CD4-positive, alpha-beta memory T cell (primary cell): ENCODE measurements at regions of chr16 and their contacts with region 1.

Region 1: DNA sequence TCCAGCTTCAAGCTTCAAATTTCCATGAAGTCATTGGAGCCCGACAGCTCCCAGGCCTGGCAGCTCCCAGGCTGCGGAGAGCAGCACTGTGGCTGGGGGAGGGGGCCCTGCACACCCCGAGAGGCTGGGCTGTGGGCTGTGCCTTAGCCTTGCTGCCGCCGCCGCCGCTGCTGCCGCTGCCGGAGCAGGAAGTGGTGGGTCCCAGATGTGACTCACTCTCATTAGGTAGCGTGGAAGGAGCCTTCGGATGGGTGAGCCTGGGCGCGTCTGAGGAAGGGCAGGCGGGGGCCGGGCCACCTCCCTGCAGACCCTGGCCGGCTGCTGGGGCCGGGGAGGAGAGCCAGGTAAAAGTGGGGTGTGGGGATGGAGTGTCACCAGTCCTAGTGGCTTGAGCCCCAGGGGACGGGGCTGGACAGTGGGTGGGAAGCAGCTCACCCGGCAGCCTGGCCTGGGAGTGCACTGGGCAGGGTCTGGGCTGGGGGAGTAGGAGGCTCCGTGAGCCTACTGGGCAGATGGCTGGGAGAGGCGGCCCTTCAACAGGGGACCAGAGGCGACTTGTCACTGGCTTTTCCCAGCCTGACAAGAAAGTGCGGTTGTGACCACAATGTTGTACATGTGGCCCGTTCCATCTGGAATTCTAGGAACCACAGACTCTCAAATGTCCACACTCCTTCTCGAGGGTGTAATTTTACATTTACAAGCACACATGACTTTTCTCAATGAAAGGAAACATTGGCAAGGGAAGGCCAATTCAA is at the start of gene ADCY7:
- DNase-seq: peak; percentile 77 to 92 (median 80)
- H3K4me3 ChIP-seq: peak within 1 kb of the TSS; percentile 75 to 76
- H3K4me3 Mint-ChIP-seq: peak within 1 kb of the TSS; percentile 93 to 99 (median 98)
- H3K27ac ChIP-seq: peak within 1 kb of the TSS; percentile 81
- H3K27ac Mint-ChIP-seq: peak within 1 kb of the TSS; percentile 95 to 99 (median 98)
- H3K4me1 ChIP-seq: peaks cover 60% of the 10 kb centered on the region
- H3K4me1 Mint-ChIP-seq: peaks cover 40 to 84% (median 56%) of the 10 kb centered on the region in 4 donors
- H3K27me3 ChIP-seq: no peaks in the 10 kb centered on the region
- H3K27me3 Mint-ChIP-seq: no peaks in the 10 kb centered on the region
- total RNA-seq, gene ADCY7: 230 to 235 TPM

Region 2: DNA sequence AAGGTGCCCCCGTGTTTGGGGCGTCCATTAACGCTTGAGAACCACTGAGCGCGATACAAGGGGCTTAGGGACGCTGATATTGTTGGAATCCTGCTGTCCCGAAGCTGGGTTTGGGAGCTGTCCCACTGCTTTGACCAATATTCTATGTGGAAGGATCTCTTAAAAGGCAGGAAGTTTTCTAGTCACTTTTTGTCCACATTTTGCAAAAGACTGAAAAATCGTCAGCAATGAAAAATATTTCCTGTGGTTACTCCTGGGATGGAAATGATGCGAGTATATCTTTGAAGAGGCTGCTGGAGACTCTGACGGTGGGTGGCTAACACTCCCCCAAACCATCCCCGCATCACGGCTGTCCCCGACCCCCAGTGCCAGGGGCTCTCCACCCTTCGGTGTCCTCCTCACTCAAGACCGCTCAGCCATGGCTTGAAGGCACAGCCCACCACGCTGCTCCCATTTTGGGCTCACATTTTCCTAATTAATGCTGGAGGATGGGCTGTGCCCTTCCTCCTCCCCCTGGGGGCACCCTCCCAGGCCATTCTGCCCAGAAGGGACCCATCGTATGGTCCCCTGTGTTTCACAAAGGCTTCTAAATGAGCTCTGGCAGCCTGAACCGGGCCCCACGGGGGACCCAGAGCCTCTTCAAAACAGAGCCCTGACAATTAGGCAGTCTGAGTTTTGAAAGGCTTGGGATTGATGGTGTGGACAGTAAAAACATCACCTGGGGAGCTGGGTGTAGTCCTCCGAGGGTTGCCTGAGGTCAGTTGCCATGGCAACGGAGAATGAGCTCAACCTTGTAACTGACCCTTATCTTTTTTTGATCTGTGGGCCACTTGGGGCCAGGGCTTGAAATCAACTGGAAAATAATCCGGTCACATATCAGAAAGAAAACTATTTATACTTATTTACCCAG is 734.3 kb before region 1 on chr16:
- CTCF ChIA-PET with region 1: no interaction called
- POLR2A ChIA-PET with region 1: no interaction called
- intact Hi-C with region 1: no loop called
- DNase-seq: peak in 1 of 5 donors; percentile 27
- H3K4me3 ChIP-seq: no peak overlapping the region
- H3K4me3 Mint-ChIP-seq: no peak overlapping the region
- H3K27ac ChIP-seq: no peak overlapping the region
- H3K27ac Mint-ChIP-seq: no peak overlapping the region
- H3K4me1 ChIP-seq: no peaks in the 10 kb centered on the region
- H3K4me1 Mint-ChIP-seq: peaks cover 0 to 13% (median 4%) of the 10 kb centered on the region in 4 donors
- H3K27me3 ChIP-seq: no peaks in the 10 kb centered on the region
- H3K27me3 Mint-ChIP-seq: peaks cover 0 to 2% of the 10 kb centered on the region in 2 donors

Region 3: DNA sequence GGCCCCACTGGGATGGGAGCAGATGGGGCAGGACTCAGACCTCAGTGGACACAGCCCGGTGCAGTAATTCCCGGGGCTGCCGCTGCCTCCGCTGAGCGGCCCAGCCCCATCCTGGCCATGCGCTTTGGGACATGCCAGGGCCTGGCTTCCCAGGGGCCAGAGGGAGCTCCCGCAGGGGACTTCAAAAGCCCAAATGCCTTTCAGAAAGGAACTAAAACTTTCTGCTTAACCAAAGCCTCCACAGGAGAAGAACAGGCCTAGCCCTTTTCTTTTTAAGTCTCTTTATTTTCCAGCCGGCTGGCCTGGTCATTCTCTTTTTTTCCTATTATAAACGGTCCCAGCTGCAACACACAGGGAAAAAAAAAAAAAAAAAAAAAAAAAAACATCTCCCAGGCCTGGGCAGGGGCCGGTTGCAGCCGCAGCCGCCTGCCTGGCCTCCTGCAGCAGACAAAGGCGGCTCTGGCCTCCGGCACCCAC is 399.9 kb before region 1 on chr16:
- CTCF ChIA-PET with region 1: no interaction called
- POLR2A ChIA-PET with region 1: no interaction called
- intact Hi-C with region 1: no loop called
- DNase-seq: no peak
- H3K4me3 ChIP-seq: no peak overlapping the region
- H3K4me3 Mint-ChIP-seq: no peak overlapping the region
- H3K27ac ChIP-seq: no peak overlapping the region
- H3K27ac Mint-ChIP-seq: no peak overlapping the region
- H3K4me1 ChIP-seq: no peaks in the 10 kb centered on the region
- H3K4me1 Mint-ChIP-seq: no peaks in the 10 kb centered on the region
- H3K27me3 ChIP-seq: no peaks in the 10 kb centered on the region
- H3K27me3 Mint-ChIP-seq: peaks cover 6 to 9% of the 10 kb centered on the region in 2 donors

Region 4: DNA sequence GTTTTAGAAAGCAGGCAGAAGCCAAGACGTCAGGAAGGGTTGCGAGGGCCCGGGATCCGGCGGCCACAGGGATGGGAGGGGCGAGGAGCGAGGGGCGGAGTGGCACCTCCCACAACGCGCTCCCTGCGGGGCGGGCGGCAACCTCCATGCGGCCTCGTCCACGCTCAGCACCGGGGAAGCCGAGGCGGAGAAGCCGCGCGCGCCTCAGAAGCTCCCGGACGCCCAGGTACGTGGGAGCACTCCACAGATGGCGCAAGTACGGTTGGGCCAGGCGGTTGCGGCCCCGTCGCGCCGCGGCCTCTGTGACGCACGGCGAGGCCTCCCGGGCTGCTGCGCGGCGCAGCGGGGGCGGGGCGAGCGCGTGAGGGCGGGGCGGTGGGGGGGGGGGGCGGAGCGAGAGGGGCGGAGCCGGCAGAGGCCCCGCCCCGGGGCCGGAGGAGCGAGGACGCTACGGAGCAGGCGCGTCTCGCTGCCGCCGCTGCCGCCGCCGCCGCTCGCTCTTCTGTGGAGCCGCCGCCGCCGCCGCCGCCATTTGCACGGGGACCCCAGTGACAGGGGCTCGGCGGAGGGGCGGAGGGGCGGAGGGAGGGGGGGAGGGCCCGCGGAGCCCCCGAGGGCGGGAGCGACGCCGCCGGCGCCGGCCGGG is 113.6 kb before region 1 on chr16 and contains the start of gene TENT4B:
- CTCF ChIA-PET with region 1: no interaction called
- POLR2A ChIA-PET with region 1: interaction called, 4 read pairs
- intact Hi-C with region 1: loop called (anchors 5 kb)
- DNase-seq: peak; percentile 92 to 95 (median 94)
- H3K4me3 ChIP-seq: peak within 1 kb of the TSS; percentile 84 to 93
- H3K4me3 Mint-ChIP-seq: peak within 1 kb of the TSS; percentile 91 to 97 (median 94)
- H3K27ac ChIP-seq: peak within 1 kb of the TSS; percentile 89
- H3K27ac Mint-ChIP-seq: peak within 1 kb of the TSS; percentile 93 to 99 (median 97)
- H3K4me1 ChIP-seq: peaks cover 47% of the 10 kb centered on the region
- H3K4me1 Mint-ChIP-seq: peaks cover 25 to 41% (median 34%) of the 10 kb centered on the region in 4 donors
- H3K27me3 ChIP-seq: no peaks in the 10 kb centered on the region
- H3K27me3 Mint-ChIP-seq: no peaks in the 10 kb centered on the region
- total RNA-seq, gene TENT4B: 22.4 to 23.5 TPM

Region 5: GRCh38 chr16:50245417-50246298 is 20.9 kb before region 1 on chr16:
- CTCF ChIA-PET with region 1: no interaction called
- POLR2A ChIA-PET with region 1: no interaction called
- intact Hi-C with region 1: no loop called
- DNase-seq: peak; percentile 25 to 46 (median 30)
- H3K4me3 ChIP-seq: peak overlapping the region in 1 of 2 donors; percentile 0
- H3K4me3 Mint-ChIP-seq: peak overlapping the region; percentile 67 to 84 (median 80)
- H3K27ac ChIP-seq: no peak overlapping the region
- H3K27ac Mint-ChIP-seq: peak overlapping the region in 3 of 7 donors; percentile 15 to 55 (median 38)
- H3K4me1 ChIP-seq: peaks cover 15% of the 10 kb centered on the region
- H3K4me1 Mint-ChIP-seq: peaks cover 0 to 8% (median 6%) of the 10 kb centered on the region in 4 donors
- H3K27me3 ChIP-seq: no peaks in the 10 kb centered on the region
- H3K27me3 Mint-ChIP-seq: no peaks in the 10 kb centered on the region

Region 6: DNA sequence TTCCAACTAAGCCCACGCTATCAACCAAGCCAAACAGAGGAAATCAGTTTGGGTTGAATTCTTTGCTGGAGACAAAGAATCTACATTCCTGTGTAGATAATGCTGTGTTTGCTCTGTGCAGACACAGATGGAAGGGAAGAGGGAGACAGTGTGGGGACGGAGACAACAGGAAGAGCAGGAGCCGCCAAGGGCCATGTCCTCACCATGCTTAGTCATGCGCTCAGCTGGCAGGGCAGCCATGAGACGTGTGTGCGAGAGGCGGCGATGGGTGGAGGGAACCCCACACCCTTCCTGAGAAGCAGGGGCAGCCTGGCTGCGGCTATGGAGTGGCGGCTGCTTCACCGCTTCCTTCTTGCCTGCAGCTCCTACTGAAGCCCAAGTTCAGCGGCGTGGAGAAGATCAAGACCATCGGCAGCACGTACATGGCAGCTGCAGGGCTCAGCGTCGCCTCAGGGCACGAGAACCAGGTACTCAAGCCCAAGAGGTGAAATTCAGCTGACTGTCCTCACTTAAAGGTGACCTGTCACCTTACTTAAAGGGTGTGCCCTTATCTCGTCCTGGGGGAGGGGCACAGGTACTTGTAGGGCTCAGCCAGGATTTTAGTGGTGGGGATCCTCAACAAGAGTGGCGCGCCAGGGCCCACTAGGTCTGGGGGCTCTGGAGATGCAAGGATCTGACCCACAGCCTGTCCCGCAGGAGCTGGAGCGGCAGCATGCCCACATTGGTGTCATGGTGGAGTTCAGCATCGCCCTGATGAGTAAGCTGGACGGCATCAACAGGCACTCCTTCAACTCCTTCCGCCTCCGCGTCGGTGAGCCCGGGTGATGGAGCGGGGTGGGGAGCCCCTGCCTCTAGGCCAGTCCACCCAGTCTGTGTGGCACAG is 47.3 kb after region 1 on chr16:
- CTCF ChIA-PET with region 1: interaction called, 5 read pairs
- POLR2A ChIA-PET with region 1: interaction called, 72 read pairs
- intact Hi-C with region 1: loop called (anchors 5 kb)
- DNase-seq: peak; percentile 26 to 67 (median 44)
- H3K4me3 ChIP-seq: no peak overlapping the region
- H3K4me3 Mint-ChIP-seq: peak overlapping the region in 5 of 8 donors; percentile 3 to 76 (median 17)
- H3K27ac ChIP-seq: no peak overlapping the region
- H3K27ac Mint-ChIP-seq: peak overlapping the region; percentile 62 to 90 (median 85)
- H3K4me1 ChIP-seq: peaks cover 25% of the 10 kb centered on the region
- H3K4me1 Mint-ChIP-seq: peaks cover 15 to 49% (median 29%) of the 10 kb centered on the region in 4 donors
- H3K27me3 ChIP-seq: no peaks in the 10 kb centered on the region
- H3K27me3 Mint-ChIP-seq: no peaks in the 10 kb centered on the region

Region 7: GRCh38 chr16:50354629-50355456 is 88.3 kb after region 1 on chr16:
- CTCF ChIA-PET with region 1: interaction called, 155 read pairs
- POLR2A ChIA-PET with region 1: interaction called, 6 read pairs
- intact Hi-C with region 1: loop called (anchors 1 kb)
- DNase-seq: peak in 4 of 5 donors; percentile 42 to 61 (median 54)
- H3K4me3 ChIP-seq: no peak overlapping the region
- H3K4me3 Mint-ChIP-seq: no peak overlapping the region
- H3K27ac ChIP-seq: no peak overlapping the region
- H3K27ac Mint-ChIP-seq: peak overlapping the region in 6 of 7 donors; percentile 0 to 89 (median 41)
- H3K4me1 ChIP-seq: peaks cover 3% of the 10 kb centered on the region
- H3K4me1 Mint-ChIP-seq: peaks cover 10 to 36% (median 23%) of the 10 kb centered on the region in 4 donors
- H3K27me3 ChIP-seq: no peaks in the 10 kb centered on the region
- H3K27me3 Mint-ChIP-seq: no peaks in the 10 kb centered on the region

Region 8: GRCh38 chr16:50478761-50479125 is 212.2 kb after region 1 on chr16:
- CTCF ChIA-PET with region 1: no interaction called
- POLR2A ChIA-PET with region 1: no interaction called
- intact Hi-C with region 1: no loop called
- DNase-seq: no peak
- H3K4me3 ChIP-seq: no peak overlapping the region
- H3K4me3 Mint-ChIP-seq: no peak overlapping the region
- H3K27ac ChIP-seq: no peak overlapping the region
- H3K27ac Mint-ChIP-seq: no peak overlapping the region
- H3K4me1 ChIP-seq: no peaks in the 10 kb centered on the region
- H3K4me1 Mint-ChIP-seq: peaks cover 0 to 2% (median 0%) of the 10 kb centered on the region in 4 donors
- H3K27me3 ChIP-seq: no peaks in the 10 kb centered on the region
- H3K27me3 Mint-ChIP-seq: peaks cover 4 to 15% of the 10 kb centered on the region in 2 donors

Region 9: DNA sequence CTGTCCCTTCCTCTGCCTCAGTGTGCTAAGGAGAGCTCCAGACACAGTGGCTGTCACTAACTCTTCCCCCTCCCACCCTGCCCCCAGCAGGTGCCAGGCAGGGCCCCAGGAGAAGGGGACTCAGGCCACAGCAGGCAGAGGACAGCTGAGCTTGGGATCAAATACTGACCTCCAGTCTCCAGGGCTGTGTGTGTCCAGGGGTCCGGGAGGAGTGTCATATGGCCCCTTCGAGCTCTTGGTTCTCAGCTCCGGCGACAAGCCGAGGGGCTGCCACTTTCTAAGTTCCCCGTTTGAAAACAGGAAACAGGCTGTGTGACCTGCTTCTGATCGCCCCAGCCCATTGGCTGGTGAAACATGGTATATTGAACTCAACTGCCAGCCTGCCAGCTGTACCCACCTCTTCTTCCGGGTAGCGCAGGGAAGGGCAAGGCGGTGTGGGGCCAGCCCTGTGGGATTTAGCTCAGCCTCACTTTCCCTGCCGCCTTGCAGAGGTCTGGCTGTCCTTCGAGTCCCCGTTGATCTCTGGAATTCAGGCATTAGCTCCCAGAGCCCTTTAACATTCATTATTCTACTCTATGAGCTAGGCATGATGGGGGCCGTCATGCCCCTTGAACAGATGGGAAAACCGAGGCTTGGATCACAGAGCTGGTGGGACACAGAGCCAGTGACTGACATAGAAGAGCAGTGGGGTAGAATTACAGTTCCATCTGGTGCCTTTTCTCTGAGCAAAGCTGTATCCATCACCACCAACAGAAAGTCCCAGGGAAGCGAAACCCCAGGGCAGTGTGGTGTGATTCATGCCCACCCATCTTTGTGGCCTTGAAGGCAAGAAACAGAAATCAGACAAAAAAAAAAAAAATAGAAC is 414.7 kb after region 1 on chr16 and contains the start of gene SNX20:
- CTCF ChIA-PET with region 1: interaction called, 3 read pairs
- POLR2A ChIA-PET with region 1: interaction called, 5 read pairs
- intact Hi-C with region 1: loop called (anchors 5 kb)
- DNase-seq: peak; percentile 69 to 82 (median 76)
- H3K4me3 ChIP-seq: peak within 1 kb of the TSS; percentile 45 to 93
- H3K4me3 Mint-ChIP-seq: peak within 1 kb of the TSS; percentile 83 to 97 (median 94)
- H3K27ac ChIP-seq: peak within 1 kb of the TSS; percentile 90
- H3K27ac Mint-ChIP-seq: peak within 1 kb of the TSS; percentile 87 to 99 (median 97)
- H3K4me1 ChIP-seq: peaks cover 93% of the 10 kb centered on the region
- H3K4me1 Mint-ChIP-seq: peaks cover 69 to 95% (median 84%) of the 10 kb centered on the region in 4 donors
- H3K27me3 ChIP-seq: no peaks in the 10 kb centered on the region
- H3K27me3 Mint-ChIP-seq: no peaks in the 10 kb centered on the region
- total RNA-seq, gene SNX20: 88.9 to 90.1 TPM